Aorta (tissue), 5 donors: ENCODE measurements at regions of chr1 and their contacts with region 1.

Region 1: GRCh38 chr1:19728413-19729145 is 63.9 kb downstream of the HTR6 start:
- DNase-seq: no peak
- ATAC-seq: peak; percentile 57
- H3K4me3 ChIP-seq: no peak overlapping the region
- H3K27ac ChIP-seq: peak overlapping the region in 1 of 2 donors; percentile 86
- H3K4me1 ChIP-seq: no peaks in the 10 kb centered on the region
- H3K27me3 ChIP-seq: no peaks in the 10 kb centered on the region

Region 2: DNA sequence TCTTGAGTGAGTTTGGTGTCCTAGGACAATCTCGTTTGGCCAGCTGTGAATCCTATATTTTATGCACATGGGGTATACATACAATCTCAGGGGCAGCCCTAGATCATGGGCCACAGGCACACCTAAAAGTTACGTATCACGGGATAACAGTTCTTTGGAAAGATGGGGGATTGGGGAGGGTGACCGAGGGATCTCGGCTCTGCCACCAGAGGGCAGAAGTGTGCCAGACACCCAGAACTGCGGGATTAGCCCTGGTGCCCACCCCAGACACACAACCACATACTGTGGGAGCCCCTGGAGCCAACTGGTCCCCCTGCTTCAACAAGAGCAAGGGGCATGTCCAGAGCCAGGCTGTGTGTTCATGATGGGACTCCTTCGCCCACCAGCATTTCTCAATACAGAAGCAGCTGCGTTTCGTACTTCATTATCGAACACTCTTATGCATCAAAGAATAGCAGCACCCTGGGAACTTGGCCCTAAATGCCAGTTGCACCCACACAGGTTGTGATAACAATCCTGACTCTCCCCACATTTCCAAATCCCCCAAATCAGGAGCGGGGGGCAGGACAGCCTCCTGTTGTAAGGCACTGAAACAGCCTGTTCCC is 33.7 kb after region 1 on chr1:
- intact Hi-C with region 1: loop called (anchors 5 kb)
- DNase-seq: no peak
- ATAC-seq: no peak
- H3K4me3 ChIP-seq: no peak overlapping the region
- H3K27ac ChIP-seq: no peak overlapping the region
- H3K4me1 ChIP-seq: no peaks in the 10 kb centered on the region
- H3K27me3 ChIP-seq: no peaks in the 10 kb centered on the region

Region 3: DNA sequence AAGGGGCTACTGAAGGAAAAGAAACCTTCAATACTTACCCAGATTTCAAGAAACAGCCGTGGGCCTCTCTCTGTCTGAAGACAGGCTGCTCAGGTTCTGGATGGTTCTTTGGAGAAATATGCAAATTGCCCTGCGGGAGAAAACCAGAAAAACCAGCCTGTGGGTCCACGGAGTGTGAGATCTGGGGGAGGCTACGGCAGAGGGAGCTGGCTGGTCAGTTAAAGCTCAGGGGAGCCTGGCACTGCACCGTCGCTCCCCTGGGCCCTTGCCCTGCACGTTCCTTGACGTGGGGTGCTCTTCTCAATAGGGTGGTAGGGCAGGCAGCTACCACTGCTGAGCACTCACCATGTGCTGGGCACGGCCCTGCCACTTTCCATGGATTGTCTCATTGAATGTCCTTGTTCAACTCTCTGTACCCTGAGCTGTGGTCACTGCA is 58.4 kb after region 1 on chr1:
- intact Hi-C with region 1: no loop called
- DNase-seq: no peak
- ATAC-seq: no peak
- H3K4me3 ChIP-seq: no peak overlapping the region
- H3K27ac ChIP-seq: no peak overlapping the region
- H3K4me1 ChIP-seq: no peaks in the 10 kb centered on the region
- H3K27me3 ChIP-seq: no peaks in the 10 kb centered on the region